Panc1 (cell line): ENCODE measurements at regions of chr14 and their contacts with region 1.

Region 1: GRCh38 chr14:21014761-21015190 is 10.1 kb downstream of the NDRG2 start:
- DNase-seq: peak; percentile 61
- ATAC-seq: peak; percentile 94
- H3K4me3 ChIP-seq: no peak overlapping the region
- H3K27ac ChIP-seq: no peak overlapping the region
- H3K4me1 ChIP-seq: no peaks in the 10 kb centered on the region
- H3K27me3 ChIP-seq: no peaks in the 10 kb centered on the region
- CTCF ChIP-seq: peak; percentile 89

Region 2: GRCh38 chr14:20857630-20858261 is 157.0 kb before region 1 on chr14:
- CTCF ChIA-PET with region 1: no interaction called
- POLR2A ChIA-PET with region 1: no interaction called
- in situ Hi-C with region 1: no loop called
- intact Hi-C with region 1: no loop called
- DNase-seq: no peak
- ATAC-seq: peak; percentile 81
- H3K4me3 ChIP-seq: peak overlapping the region in 1 of 2 experiments; percentile 35; a peak in 2 of 4 replicates
- H3K27ac ChIP-seq: no peak overlapping the region
- H3K4me1 ChIP-seq: no peaks in the 10 kb centered on the region; the same call in 1 of the 2 replicates
- H3K27me3 ChIP-seq: peaks cover 5% of the 10 kb centered on the region
- CTCF ChIP-seq: peak; percentile 86

Region 3: GRCh38 chr14:21034707-21035106 is 19.9 kb after region 1 on chr14 and contains the start of gene RNASE13:
- CTCF ChIA-PET with region 1: interaction called, 33 read pairs
- POLR2A ChIA-PET with region 1: no interaction called
- in situ Hi-C with region 1: no loop called
- intact Hi-C with region 1: no loop called
- DNase-seq: no peak
- ATAC-seq: no peak
- H3K4me3 ChIP-seq: no peak within 1 kb of the TSS
- H3K27ac ChIP-seq: no peak within 1 kb of the TSS
- H3K4me1 ChIP-seq: no peaks in the 10 kb centered on the region
- H3K27me3 ChIP-seq: no peaks in the 10 kb centered on the region; the same call in none of the 2 replicates
- CTCF ChIP-seq: no peak
- total RNA-seq, gene RNASE13: not detected

Region 4: DNA sequence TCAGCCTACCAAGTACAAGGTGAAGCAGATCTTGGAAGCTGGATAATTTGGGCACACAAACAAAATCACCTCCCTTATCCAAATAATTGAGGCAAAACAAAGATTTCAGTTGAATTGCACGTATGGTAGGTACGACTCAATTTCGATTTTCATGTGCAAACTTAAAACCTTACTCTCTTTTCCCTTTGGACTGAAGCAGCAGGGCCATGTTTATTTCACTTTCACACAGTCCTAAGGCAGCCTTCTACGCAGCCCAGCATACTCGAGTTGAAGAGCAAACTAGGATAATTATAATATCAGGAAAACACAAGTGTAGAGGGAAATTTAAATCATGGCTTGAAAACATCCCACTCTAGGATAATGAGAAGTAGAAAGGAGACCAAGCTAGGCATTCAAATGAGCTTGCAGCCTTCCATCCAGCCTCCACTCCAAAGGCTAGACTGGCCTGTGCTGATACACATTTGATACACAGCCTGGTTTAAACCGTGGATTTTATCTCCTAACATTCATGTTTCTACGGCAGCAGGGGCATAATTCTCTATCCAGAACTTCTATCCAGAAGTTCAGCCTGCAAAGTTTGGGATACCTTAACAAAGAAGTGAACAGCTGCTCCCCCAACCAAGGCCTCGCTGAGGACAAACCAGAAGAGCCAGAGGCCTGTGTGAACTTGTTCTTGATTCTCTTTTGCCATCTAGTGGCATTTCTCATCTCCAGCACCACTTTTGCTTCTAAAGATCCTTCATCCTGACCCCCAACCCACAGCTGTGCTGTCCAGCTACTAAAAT is 25.0 kb after region 1 on chr14:
- CTCF ChIA-PET with region 1: interaction called, 33 read pairs
- POLR2A ChIA-PET with region 1: no interaction called
- in situ Hi-C with region 1: no loop called
- intact Hi-C with region 1: loop called (anchors 2 kb)
- DNase-seq: no peak
- ATAC-seq: peak; percentile 94
- H3K4me3 ChIP-seq: no peak overlapping the region
- H3K27ac ChIP-seq: no peak overlapping the region
- H3K4me1 ChIP-seq: no peaks in the 10 kb centered on the region
- H3K27me3 ChIP-seq: no peaks in the 10 kb centered on the region; the same call in none of the 2 replicates
- CTCF ChIP-seq: peak; percentile 71

Region 5: GRCh38 chr14:21092273-21093011 is 77.7 kb after region 1 on chr14:
- CTCF ChIA-PET with region 1: interaction called, 18 read pairs
- POLR2A ChIA-PET with region 1: interaction called, 3 read pairs
- in situ Hi-C with region 1: no loop called
- intact Hi-C with region 1: no loop called
- DNase-seq: peak; percentile 82
- ATAC-seq: peak; percentile 83
- H3K4me3 ChIP-seq: no peak overlapping the region
- H3K27ac ChIP-seq: no peak overlapping the region
- H3K4me1 ChIP-seq: peaks cover 4% of the 10 kb centered on the region; the same call in 1 of the 2 replicates
- H3K27me3 ChIP-seq: no peaks in the 10 kb centered on the region
- CTCF ChIP-seq: peak; percentile 100

Region 6: GRCh38 chr14:21103710-21104447 is 89.1 kb after region 1 on chr14:
- CTCF ChIA-PET with region 1: interaction called, 18 read pairs
- POLR2A ChIA-PET with region 1: no interaction called
- in situ Hi-C with region 1: no loop called
- intact Hi-C with region 1: loop called (anchors 2 kb)
- DNase-seq: peak; percentile 78
- ATAC-seq: peak; percentile 95
- H3K4me3 ChIP-seq: peak overlapping the region; percentile 65 to 77
- H3K27ac ChIP-seq: peak overlapping the region; percentile 92
- H3K4me1 ChIP-seq: peaks cover 17% of the 10 kb centered on the region
- H3K27me3 ChIP-seq: no peaks in the 10 kb centered on the region
- CTCF ChIP-seq: peak; percentile 72

Region 7: GRCh38 chr14:21168055-21168454 is 153.3 kb after region 1 on chr14:
- CTCF ChIA-PET with region 1: no interaction called
- POLR2A ChIA-PET with region 1: no interaction called
- in situ Hi-C with region 1: no loop called
- intact Hi-C with region 1: no loop called
- DNase-seq: no peak
- ATAC-seq: no peak
- H3K4me3 ChIP-seq: no peak overlapping the region
- H3K27ac ChIP-seq: no peak overlapping the region
- H3K4me1 ChIP-seq: no peaks in the 10 kb centered on the region
- H3K27me3 ChIP-seq: no peaks in the 10 kb centered on the region
- CTCF ChIP-seq: no peak